Dendritic cell treated with granulocyte-macrophage colony-stimulating factor and Interleukin-4, amounts not matched to agents 40 ng/mL and 50 ng/mL, for 4 days (primary cell): ENCODE measurements at regions of chr14 and their contacts with region 1.

Region 1: GRCh38 chr14:69013943-69014775 is 35.1 kb upstream of the ACTN1 start:
- H3K4me3 Mint-ChIP-seq: no peak overlapping the region
- H3K27ac Mint-ChIP-seq: peak overlapping the region; percentile 60
- H3K4me1 Mint-ChIP-seq: peaks cover 26% of the 10 kb centered on the region
- H3K27me3 Mint-ChIP-seq: no peaks in the 10 kb centered on the region

Region 2: GRCh38 chr14:69043596-69044260 is 29.6 kb after region 1 on chr14:
- intact Hi-C with region 1: loop called (anchors 2 kb)
- H3K4me3 Mint-ChIP-seq: peak overlapping the region; percentile 46
- H3K27ac Mint-ChIP-seq: peak overlapping the region; percentile 95
- H3K4me1 Mint-ChIP-seq: peaks cover 89% of the 10 kb centered on the region
- H3K27me3 Mint-ChIP-seq: peaks cover 3% of the 10 kb centered on the region